ENCODE measurements at regions of chr3 and their contacts with region 1.

Region 1: DNA sequence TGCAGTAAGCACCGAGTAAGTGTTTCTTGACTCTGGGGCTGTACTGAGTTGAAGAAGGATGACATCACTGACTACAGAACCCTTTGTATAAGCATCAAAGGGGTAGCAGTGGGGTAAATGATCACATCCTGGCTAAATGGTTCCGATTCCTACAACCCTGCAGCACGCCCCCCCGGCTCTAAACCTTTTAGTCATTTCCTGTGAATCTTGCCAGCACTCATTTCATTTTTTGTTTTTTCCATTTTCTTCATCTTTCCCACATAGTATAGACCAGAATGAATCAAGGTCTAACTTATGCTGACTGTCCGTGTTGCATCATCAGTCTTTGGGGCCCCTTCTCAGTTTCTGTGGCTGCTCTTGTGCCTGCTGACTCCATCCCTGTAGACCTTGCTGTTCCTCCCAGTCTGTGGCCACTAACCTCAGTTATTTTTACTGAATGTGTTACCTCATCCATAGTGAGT is 383.1 kb upstream of the TPRG1 start:
- DNase-seq: peak; percentile 49
- H3K4me3 Mint-ChIP-seq: no peak overlapping the region
- H3K27ac Mint-ChIP-seq: no peak overlapping the region
- H3K4me1 Mint-ChIP-seq: peaks cover 6% of the 10 kb centered on the region
- H3K27me3 Mint-ChIP-seq: peaks cover 8% of the 10 kb centered on the region

Region 2: GRCh38 chr3:188154014-188154808 is 634.4 kb before region 1 on chr3 and contains the start of gene LPP:
- intact Hi-C with region 1: loop called (anchors 2 kb)
- DNase-seq: peak; percentile 90
- H3K4me3 Mint-ChIP-seq: peak within 1 kb of the TSS; percentile 89
- H3K27ac Mint-ChIP-seq: peak within 1 kb of the TSS; percentile 87
- H3K4me1 Mint-ChIP-seq: peaks cover 71% of the 10 kb centered on the region
- H3K27me3 Mint-ChIP-seq: no peaks in the 10 kb centered on the region
- total RNA-seq, gene LPP: 38.2 and 46.4 TPM in 2 replicates

Region 3: DNA sequence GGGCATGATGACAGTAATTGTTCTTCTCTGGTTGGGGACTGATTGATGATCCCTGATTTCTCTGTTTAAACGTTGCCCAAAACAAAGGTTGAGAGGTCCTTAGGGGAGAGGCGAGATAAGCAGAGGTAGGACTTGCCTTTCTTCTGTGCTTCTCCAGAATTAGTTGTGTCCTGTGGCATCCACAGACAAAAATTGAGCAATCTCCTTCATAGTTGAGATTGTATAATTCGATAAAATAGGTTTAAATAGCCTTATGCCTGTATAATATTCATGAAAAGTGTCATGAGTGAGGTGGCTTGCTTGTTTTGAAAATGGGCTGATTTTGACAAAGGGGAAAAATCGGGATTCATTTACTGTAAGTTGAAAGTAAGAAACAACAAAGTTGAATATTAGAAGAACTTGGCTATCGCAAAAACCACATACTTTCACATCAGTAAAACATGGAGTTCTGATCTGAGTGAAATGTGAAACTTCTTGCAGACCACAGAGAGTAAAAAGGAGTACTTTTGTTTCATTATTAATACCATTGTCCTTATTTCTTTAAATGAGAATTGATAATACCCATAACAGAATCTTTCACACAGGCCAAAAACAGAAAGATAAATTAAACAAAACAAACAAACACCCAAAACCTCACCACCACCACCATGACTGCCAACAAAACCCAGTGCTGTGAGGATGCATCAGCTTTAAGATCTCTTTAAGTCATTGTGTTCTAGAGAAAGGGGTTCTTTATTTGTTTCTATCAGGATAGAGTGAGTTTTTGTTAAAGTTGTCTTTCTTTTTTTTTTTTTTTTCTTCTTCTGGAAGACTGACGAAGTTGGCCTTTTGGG is 479.0 kb before region 1 on chr3:
- intact Hi-C with region 1: loop called (anchors 1 kb)
- DNase-seq: no peak
- H3K4me3 Mint-ChIP-seq: peak overlapping the region; percentile 40
- H3K27ac Mint-ChIP-seq: peak overlapping the region; percentile 64
- H3K4me1 Mint-ChIP-seq: peaks cover 35% of the 10 kb centered on the region
- H3K27me3 Mint-ChIP-seq: peaks cover 9% of the 10 kb centered on the region

Region 4: DNA sequence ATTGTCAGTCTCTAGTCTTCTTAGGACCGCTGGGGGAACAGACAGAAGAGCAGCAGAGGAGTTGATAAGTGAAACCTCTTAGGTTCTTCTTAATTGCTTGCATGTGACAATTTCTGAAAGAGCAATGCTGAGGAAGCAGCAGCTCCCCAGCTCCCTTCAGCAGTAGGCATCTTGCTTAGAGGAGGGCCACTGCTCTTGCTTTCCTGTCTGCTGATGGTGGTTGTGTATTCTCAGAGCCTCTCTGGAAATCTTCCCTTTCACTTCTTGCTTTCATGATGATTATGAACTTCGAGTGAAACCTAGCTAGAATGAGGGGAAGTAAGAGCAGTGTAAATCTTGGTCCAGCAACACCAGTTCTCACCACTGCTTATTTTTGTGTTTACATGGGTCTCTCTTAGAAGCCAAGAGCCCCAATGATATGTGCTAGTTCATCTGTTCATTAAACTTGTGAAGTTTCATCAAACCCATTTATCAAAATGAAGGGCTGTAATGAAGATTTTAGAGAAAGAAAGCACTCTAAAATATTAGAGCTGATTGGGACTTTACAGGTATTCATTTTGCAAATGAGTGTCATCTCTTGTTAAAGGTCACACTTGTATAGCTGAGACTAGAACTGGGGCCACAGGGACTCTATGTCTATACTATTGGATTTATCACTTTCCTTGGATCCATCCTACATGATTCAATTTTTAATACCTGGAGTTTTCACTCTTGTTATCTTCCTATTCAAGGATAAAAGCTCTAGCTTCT is 388.0 kb before region 1 on chr3:
- intact Hi-C with region 1: loop called (anchors 1 kb)
- DNase-seq: peak; percentile 22
- H3K4me3 Mint-ChIP-seq: no peak overlapping the region
- H3K27ac Mint-ChIP-seq: peak overlapping the region; percentile 63
- H3K4me1 Mint-ChIP-seq: peaks cover 73% of the 10 kb centered on the region
- H3K27me3 Mint-ChIP-seq: peaks cover 4% of the 10 kb centered on the region

Region 5: DNA sequence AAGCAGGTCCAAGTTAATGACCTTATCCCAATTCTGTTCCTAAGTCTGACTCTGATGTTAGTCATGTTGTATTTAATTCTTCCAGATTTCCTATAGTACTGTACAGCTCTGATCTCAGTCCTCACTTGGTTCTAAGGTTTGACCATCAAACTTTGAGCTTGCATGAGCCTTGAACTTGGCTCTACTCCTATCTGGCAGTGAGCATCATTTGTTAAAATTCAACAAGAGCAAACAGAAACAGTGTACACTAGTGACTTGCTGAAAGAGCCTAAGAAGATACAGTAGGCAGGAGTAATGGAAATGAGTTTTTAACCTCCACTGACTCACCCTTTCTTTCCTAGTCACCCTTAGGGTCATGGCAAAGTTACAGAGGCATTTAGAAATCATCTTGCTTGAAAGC is 68.0 kb before region 1 on chr3:
- intact Hi-C with region 1: loop called (anchors 1 kb)
- DNase-seq: no peak
- H3K4me3 Mint-ChIP-seq: no peak overlapping the region
- H3K27ac Mint-ChIP-seq: no peak overlapping the region
- H3K4me1 Mint-ChIP-seq: peaks cover 35% of the 10 kb centered on the region
- H3K27me3 Mint-ChIP-seq: peaks cover 2% of the 10 kb centered on the region

Region 6: DNA sequence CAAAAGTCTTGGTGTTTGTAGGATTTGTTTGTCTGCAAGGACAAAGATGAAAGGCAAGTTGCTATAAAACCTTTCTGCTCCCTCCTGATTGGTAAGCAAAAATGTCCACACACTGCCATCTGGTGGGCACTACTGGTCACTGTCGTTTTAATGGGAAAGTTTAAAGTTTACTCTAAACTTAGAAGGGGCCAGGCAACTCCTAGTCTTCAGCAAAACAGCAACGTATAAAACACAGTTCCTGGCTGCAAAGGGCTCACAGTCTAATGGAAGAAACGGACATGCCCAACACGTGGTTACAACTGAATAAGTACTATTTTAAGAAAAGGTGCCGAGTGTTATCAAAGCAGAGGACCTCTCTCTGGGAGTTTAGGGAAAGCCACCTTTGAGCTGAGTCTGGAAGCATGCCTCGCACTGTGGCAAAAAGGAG is 359.4 kb after region 1 on chr3:
- intact Hi-C with region 1: loop called (anchors 2 kb)
- DNase-seq: peak; percentile 43
- H3K4me3 Mint-ChIP-seq: no peak overlapping the region
- H3K27ac Mint-ChIP-seq: no peak overlapping the region
- H3K4me1 Mint-ChIP-seq: peaks cover 47% of the 10 kb centered on the region
- H3K27me3 Mint-ChIP-seq: peaks cover 6% of the 10 kb centered on the region